Activated CD8-positive, alpha-beta T cell treated with anti-CD3 and anti-CD28 coated beads, Interleukin-2, amount 10 ng/mL, durations not matched to agents 7 days and 5 days (primary cell): ENCODE measurements at regions of chr17 and their contacts with region 1.

Region 1: DNA sequence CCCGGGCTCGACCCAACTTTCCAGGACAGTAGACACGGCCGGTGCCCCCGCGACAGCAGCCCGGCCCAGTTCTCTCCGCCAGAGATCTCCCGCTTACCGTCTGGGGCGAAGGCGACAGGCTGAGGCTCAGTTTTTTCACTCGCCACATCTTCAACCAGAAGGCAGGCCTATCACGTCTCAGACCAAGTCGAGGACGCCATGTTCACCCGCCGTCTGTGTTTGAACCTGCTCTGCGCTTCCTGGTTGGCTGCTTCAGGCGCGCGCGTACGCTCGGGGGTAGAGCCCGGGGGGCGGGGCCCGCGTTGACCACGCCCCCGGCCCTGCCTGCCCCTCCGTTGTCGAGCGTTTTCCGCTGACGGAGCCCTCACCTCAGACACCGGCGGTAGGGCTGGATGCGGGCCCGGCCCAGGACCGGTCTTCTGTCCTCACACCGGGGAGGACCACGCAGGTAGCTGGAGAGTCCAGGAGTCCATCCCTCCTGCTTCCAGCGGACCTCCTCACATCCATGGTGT is at the start of gene SPAG5:
- DNase-seq: peak; percentile 96
- ATAC-seq: peak; percentile 95
- H3K4me3 Mint-ChIP-seq: peak within 1 kb of the TSS; percentile 84
- H3K27ac Mint-ChIP-seq: peak within 1 kb of the TSS; percentile 91
- H3K4me1 Mint-ChIP-seq: peaks cover 20% of the 10 kb centered on the region
- H3K27me3 Mint-ChIP-seq: no peaks in the 10 kb centered on the region
- total RNA-seq, gene SPAG5: 162 to 170 TPM

Region 2: GRCh38 chr17:28180449-28180848 is 418.4 kb before region 1 on chr17:
- CTCF ChIA-PET with region 1: no interaction called
- POLR2A ChIA-PET with region 1: no interaction called
- DNase-seq: no peak
- ATAC-seq: no peak
- H3K4me3 Mint-ChIP-seq: no peak overlapping the region
- H3K27ac Mint-ChIP-seq: no peak overlapping the region
- H3K4me1 Mint-ChIP-seq: peaks cover 6% of the 10 kb centered on the region
- H3K27me3 Mint-ChIP-seq: no peaks in the 10 kb centered on the region

Region 3: GRCh38 chr17:28318759-28319660 is 279.8 kb before region 1 on chr17 and contains the start of gene TMEM97:
- CTCF ChIA-PET with region 1: no interaction called
- POLR2A ChIA-PET with region 1: no interaction called
- DNase-seq: peak; percentile 98
- ATAC-seq: peak; percentile 100
- H3K4me3 Mint-ChIP-seq: peak within 1 kb of the TSS; percentile 93
- H3K27ac Mint-ChIP-seq: peak within 1 kb of the TSS; percentile 87
- H3K4me1 Mint-ChIP-seq: peaks cover 43% of the 10 kb centered on the region
- H3K27me3 Mint-ChIP-seq: no peaks in the 10 kb centered on the region
- total RNA-seq, gene TMEM97: 31.2 to 32.0 TPM

Region 4: GRCh38 chr17:28524476-28525368 is 74.1 kb before region 1 on chr17:
- CTCF ChIA-PET with region 1: no interaction called
- POLR2A ChIA-PET with region 1: no interaction called
- DNase-seq: no peak
- ATAC-seq: no peak
- H3K4me3 Mint-ChIP-seq: no peak overlapping the region
- H3K27ac Mint-ChIP-seq: no peak overlapping the region
- H3K4me1 Mint-ChIP-seq: no peaks in the 10 kb centered on the region
- H3K27me3 Mint-ChIP-seq: no peaks in the 10 kb centered on the region

Region 5: GRCh38 chr17:28571255-28572122 is 27.4 kb before region 1 on chr17 and contains the start of gene PIGS:
- CTCF ChIA-PET with region 1: interaction called, 8 read pairs
- POLR2A ChIA-PET with region 1: interaction called, 16 read pairs
- DNase-seq: peak; percentile 94
- ATAC-seq: peak; percentile 98
- H3K4me3 Mint-ChIP-seq: peak within 1 kb of the TSS; percentile 94
- H3K27ac Mint-ChIP-seq: peak within 1 kb of the TSS; percentile 95
- H3K4me1 Mint-ChIP-seq: peaks cover 58% of the 10 kb centered on the region
- H3K27me3 Mint-ChIP-seq: no peaks in the 10 kb centered on the region
- total RNA-seq, gene PIGS: 60.0 to 61.1 TPM

Region 6: GRCh38 chr17:28576758-28577465 is 21.9 kb before region 1 on chr17 and contains the start of gene ALDOC:
- CTCF ChIA-PET with region 1: interaction called, 8 read pairs
- POLR2A ChIA-PET with region 1: interaction called, 18 read pairs
- DNase-seq: peak; percentile 98
- ATAC-seq: peak; percentile 95
- H3K4me3 Mint-ChIP-seq: peak within 1 kb of the TSS; percentile 84
- H3K27ac Mint-ChIP-seq: peak within 1 kb of the TSS; percentile 86
- H3K4me1 Mint-ChIP-seq: peaks cover 47% of the 10 kb centered on the region
- H3K27me3 Mint-ChIP-seq: no peaks in the 10 kb centered on the region
- total RNA-seq, gene ALDOC: 97.3 to 99.7 TPM

Region 7: DNA sequence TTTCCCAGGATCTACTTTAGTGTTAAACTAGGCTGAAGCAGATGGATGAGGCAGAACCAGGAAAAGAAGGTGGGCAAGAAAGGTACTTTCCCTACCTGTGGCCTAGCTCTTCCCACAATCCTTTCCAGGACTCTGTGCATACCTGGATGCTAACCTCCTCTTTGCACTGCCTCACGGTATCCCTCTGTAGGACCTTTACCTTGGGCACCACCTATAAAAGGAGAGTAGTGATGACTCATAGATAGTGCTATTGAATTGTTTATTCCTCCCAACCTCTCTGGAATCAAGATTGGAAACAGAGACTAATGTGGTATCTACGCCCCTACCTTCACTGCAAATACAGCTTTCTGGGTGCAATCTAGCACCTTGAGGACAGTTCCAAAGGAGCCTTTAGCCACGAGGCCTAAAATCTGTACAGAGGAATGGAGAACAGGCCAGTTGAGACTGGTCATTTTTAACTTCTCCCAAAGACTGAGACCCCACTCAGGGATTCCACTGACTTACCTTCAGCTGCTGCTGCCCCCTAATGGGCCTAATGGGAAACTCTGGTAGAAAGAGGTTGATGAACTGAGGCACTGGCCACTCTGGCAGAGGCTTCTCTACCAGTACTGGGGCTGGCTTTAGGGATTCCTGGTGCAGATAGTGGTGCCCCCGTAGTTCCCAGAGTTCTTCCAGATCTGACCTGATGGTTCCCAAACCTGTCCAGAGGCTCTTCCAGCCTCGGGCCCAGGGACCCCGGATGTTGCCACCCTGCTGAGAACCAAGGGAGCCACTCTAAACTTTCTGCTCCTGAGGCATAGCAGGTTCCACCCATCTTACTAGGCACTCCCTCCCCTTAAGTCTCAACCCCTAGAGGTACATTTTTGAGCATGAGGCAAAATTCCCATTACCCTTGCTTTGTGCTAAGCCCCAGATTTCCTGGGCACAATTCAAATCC is 14.3 kb after region 1 on chr17:
- CTCF ChIA-PET with region 1: interaction called, 17 read pairs
- POLR2A ChIA-PET with region 1: interaction called, 8 read pairs
- DNase-seq: peak; percentile 39
- ATAC-seq: peak; percentile 69
- H3K4me3 Mint-ChIP-seq: no peak overlapping the region
- H3K27ac Mint-ChIP-seq: no peak overlapping the region
- H3K4me1 Mint-ChIP-seq: peaks cover 3% of the 10 kb centered on the region
- H3K27me3 Mint-ChIP-seq: no peaks in the 10 kb centered on the region

Region 8: DNA sequence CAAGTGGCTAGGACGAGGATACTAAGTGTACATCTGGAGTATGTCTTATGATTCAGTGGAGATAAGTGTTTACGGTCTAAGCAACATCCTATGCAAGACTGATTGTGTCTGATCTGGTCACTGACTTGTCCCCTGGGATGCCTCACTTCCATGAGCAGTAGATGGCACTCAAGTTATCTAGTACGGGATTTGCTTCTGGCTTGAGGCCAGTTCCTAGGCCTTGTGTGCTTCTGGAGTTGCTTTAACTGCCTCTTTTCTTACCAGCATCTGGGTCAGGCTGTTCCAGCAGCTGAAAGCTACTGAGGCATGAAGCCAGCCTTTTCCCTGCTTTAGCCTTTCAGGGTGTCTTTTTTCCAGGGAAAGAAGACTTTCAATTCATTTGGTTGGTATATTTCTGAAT is 86.1 kb after region 1 on chr17:
- CTCF ChIA-PET with region 1: no interaction called
- POLR2A ChIA-PET with region 1: no interaction called
- DNase-seq: no peak
- ATAC-seq: no peak
- H3K4me3 Mint-ChIP-seq: no peak overlapping the region
- H3K27ac Mint-ChIP-seq: no peak overlapping the region
- H3K4me1 Mint-ChIP-seq: no peaks in the 10 kb centered on the region
- H3K27me3 Mint-ChIP-seq: no peaks in the 10 kb centered on the region